Breast epithelium (tissue), 4 donors: ENCODE measurements at regions of chr12 and their contacts with region 1.

Region 1: DNA sequence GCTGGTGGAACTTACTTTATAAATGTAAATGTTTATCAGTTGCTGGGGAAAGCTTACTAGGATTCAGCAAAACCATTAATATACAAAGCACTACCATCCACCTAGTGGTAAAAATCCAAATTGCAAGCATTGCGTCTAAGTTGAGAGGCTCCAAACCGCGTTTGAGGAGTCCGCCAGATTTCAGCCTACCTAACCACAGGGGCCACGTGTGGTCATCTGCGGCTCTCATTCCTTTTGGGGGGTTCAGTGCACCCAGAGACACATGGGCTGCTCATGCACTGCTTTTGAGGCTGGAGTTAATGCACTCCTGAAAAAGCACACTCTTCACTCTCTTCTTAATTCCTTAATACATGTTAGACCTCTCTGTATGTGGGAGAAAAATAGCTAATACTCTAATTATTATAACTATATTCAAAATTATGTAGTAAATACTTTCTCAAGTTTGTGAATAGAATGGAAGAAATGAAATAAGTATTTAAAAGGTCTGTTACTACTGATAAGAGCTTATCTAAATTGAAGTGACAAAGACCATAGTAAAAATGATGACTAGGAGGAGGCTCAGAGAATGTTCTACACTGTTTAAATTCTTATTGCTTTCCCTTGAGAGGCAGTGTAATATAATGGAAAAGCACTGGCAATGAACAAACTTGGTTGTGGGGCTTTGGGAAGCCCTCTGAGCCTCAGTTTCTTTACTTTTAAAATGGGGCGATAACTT is 41.4 kb upstream of the MANSC4 start:
- DNase-seq: no peak
- H3K4me3 ChIP-seq: peak overlapping the region in 1 of 3 donors; percentile 34
- H3K27ac ChIP-seq: no peak overlapping the region
- H3K4me1 ChIP-seq: peaks cover 0 to 6% of the 10 kb centered on the region in 2 donors
- H3K27me3 ChIP-seq: no peaks in the 10 kb centered on the region
- CTCF ChIP-seq: peak; percentile 72 to 74 (median 73)
- POLR2A ChIP-seq: no peak

Region 2: GRCh38 chr12:27573972-27574371 is 247.4 kb before region 1 on chr12:
- intact Hi-C with region 1: no loop called
- DNase-seq: no peak
- H3K4me3 ChIP-seq: no peak overlapping the region
- H3K27ac ChIP-seq: no peak overlapping the region
- H3K4me1 ChIP-seq: no peaks in the 10 kb centered on the region
- H3K27me3 ChIP-seq: no peaks in the 10 kb centered on the region
- CTCF ChIP-seq: no peak
- POLR2A ChIP-seq: no peak

Region 3: DNA sequence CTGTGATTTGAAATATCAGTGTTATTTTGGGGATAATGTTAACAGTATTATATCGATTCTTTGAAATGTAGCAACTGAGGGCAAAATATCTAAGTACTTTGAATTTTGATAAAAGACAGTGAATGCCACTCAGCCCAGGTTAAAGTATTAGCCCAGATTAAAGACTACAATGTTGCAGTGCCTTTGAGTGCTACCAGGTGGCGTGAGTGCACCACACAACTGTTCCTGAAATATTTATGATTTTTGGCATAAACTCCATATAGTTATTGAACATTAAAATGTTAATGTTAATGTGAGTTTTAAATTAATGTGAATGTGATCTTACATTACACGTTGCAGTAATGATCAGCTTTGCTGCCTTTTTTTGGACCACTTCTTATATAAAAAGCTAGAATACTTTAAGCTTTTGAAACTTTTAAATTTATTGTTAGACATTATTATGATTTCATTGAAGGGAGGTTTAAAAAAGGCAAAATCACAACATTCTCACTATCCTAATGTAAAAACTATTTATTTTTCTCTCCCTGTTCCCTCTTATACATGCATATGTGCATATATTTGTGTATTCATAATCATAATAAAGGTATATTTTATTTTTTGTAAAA is 88.3 kb before region 1 on chr12:
- intact Hi-C with region 1: loop called (anchors 5 kb)
- DNase-seq: no peak
- H3K4me3 ChIP-seq: no peak overlapping the region
- H3K27ac ChIP-seq: no peak overlapping the region
- H3K4me1 ChIP-seq: no peaks in the 10 kb centered on the region
- H3K27me3 ChIP-seq: no peaks in the 10 kb centered on the region
- CTCF ChIP-seq: peak; percentile 57 to 81 (median 76)
- POLR2A ChIP-seq: no peak

Region 4: GRCh38 chr12:27899151-27899661 is 77.8 kb after region 1 on chr12:
- intact Hi-C with region 1: no loop called
- DNase-seq: no peak
- H3K4me3 ChIP-seq: no peak overlapping the region
- H3K27ac ChIP-seq: no peak overlapping the region
- H3K4me1 ChIP-seq: no peaks in the 10 kb centered on the region
- H3K27me3 ChIP-seq: no peaks in the 10 kb centered on the region
- CTCF ChIP-seq: no peak
- POLR2A ChIP-seq: no peak